Caco-2 (cell line): ENCODE measurements at regions of chr4 and their contacts with region 1.

Region 1: GRCh38 chr4:118589471-118590055 is 95.6 kb upstream of the METTL14 start:
- DNase-seq: no peak
- H3K4me3 ChIP-seq: no peak overlapping the region
- H3K4me3 Mint-ChIP-seq: no peak overlapping the region
- H3K27ac Mint-ChIP-seq: no peak overlapping the region
- H3K4me1 ChIP-seq: peaks cover 5% of the 10 kb centered on the region
- H3K4me1 Mint-ChIP-seq: peaks cover 11% of the 10 kb centered on the region
- H3K27me3 ChIP-seq: no peaks in the 10 kb centered on the region
- H3K27me3 Mint-ChIP-seq: peaks cover 3% of the 10 kb centered on the region
- CTCF ChIP-seq: no peak

Region 2: DNA sequence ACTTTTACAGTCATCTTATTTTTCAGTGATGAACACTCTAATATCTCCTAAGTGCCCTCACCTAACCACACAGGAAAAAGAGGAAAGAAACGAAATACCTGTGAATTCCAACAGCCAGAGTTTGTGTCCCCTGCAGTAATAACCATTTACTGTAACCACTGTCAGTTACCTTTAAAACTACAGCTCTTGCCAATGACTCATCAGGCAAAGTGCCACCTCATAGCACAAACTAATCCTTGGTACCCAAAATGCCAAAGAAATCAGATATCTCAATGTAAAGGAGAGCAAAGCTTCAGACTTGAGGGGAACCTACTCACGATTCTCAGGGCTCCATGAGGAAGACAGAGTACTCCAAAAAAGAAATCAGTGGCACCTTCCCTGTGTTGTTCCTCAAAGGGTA is 408.8 kb before region 1 on chr4:
- CTCF ChIA-PET with region 1: no interaction called
- POLR2A ChIA-PET with region 1: no interaction called
- intact Hi-C with region 1: no loop called
- DNase-seq: no peak
- H3K4me3 ChIP-seq: no peak overlapping the region
- H3K4me3 Mint-ChIP-seq: no peak overlapping the region
- H3K27ac Mint-ChIP-seq: no peak overlapping the region
- H3K4me1 ChIP-seq: peaks cover 7% of the 10 kb centered on the region; the same call in 1 of the 2 replicates
- H3K4me1 Mint-ChIP-seq: peaks cover under 1% of the 10 kb centered on the region
- H3K27me3 ChIP-seq: no peaks in the 10 kb centered on the region
- H3K27me3 Mint-ChIP-seq: no peaks in the 10 kb centered on the region
- CTCF ChIP-seq: no peak

Region 3: DNA sequence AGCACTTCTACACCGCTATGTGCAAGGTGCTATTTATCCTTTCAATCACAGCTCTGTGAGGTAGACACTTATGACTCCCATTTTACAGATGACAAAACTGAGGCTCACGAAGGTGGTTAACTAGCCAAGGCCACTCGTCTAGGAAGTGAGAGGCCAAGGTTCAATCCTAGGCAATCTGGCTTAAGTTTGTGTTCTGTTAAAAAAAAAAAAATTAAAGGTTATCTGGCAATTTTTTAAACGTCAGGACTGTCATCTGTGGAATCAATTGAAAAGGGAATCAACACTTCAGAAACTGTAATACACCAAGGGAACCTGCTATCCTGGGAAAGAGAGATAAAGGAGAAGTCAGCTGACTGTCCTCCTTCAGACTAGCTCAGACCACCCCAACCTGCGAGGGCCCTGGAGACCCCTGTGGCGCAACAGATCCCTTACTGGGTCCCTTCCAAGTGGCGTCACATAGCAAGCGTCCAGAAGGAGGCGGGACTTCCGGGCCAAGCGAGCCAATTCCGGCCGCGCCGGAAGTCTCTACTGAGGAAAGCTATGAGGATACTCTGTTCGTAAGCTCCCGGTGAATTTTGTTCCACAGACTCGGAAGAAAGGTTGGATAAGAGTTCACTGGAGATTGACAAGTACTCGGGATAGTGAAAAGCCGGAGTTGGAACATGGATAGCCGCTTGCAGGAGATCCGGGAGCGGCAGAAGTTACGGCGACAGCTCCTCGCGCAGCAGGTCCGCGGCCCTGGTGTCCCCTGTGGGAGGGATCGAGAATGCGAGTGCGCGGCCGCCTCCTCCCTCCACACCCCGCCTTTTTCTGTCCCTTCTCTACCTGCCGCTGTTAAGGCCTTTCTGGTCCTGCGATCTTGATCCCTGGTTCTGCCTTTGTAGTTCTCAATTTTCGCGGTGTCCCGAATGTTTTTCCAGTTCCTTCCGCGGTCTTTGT is 95.6 kb after region 1 on chr4 and contains the start of gene METTL14:
- CTCF ChIA-PET with region 1: no interaction called
- POLR2A ChIA-PET with region 1: interaction called, 3 read pairs
- intact Hi-C with region 1: loop called (anchors 2 kb)
- DNase-seq: peak; percentile 92
- H3K4me3 ChIP-seq: peak within 1 kb of the TSS; percentile 73
- H3K4me3 Mint-ChIP-seq: peak within 1 kb of the TSS; percentile 95
- H3K27ac Mint-ChIP-seq: peak within 1 kb of the TSS; percentile 96
- H3K4me1 ChIP-seq: peaks cover 4% of the 10 kb centered on the region; the same call in 1 of the 2 replicates
- H3K4me1 Mint-ChIP-seq: peaks cover 12% of the 10 kb centered on the region
- H3K27me3 ChIP-seq: no peaks in the 10 kb centered on the region
- H3K27me3 Mint-ChIP-seq: no peaks in the 10 kb centered on the region
- CTCF ChIP-seq: peak in 1 of 2 experiments; percentile 21
- total RNA-seq, gene METTL14: 46.7 and 51.8 TPM in 2 replicates